Naive thymus-derived CD4-positive, alpha-beta T cell (primary cell): ENCODE measurements at regions of chr15 and their contacts with region 1.

Region 1: GRCh38 chr15:40694688-40695468 is at the start of gene RAD51:
- DNase-seq: peak; percentile 81 to 93 (median 92)
- ATAC-seq: peak; percentile 97
- H3K4me3 ChIP-seq: peak within 1 kb of the TSS; percentile 97
- H3K4me3 Mint-ChIP-seq: peak within 1 kb of the TSS; percentile 93 to 100 (median 95)
- H3K27ac ChIP-seq: peak within 1 kb of the TSS; percentile 91
- H3K27ac Mint-ChIP-seq: peak within 1 kb of the TSS; percentile 95 to 100 (median 99)
- H3K4me1 ChIP-seq: peaks cover 10% of the 10 kb centered on the region in 2 donors
- H3K4me1 Mint-ChIP-seq: peaks cover 14 to 42% (median 22%) of the 10 kb centered on the region in 7 donors
- H3K27me3 ChIP-seq: no peaks in the 10 kb centered on the region
- H3K27me3 Mint-ChIP-seq: no peaks in the 10 kb centered on the region
- total RNA-seq, gene RAD51: 0.51 to 51.5 (median 1.4) TPM

Region 2: DNA sequence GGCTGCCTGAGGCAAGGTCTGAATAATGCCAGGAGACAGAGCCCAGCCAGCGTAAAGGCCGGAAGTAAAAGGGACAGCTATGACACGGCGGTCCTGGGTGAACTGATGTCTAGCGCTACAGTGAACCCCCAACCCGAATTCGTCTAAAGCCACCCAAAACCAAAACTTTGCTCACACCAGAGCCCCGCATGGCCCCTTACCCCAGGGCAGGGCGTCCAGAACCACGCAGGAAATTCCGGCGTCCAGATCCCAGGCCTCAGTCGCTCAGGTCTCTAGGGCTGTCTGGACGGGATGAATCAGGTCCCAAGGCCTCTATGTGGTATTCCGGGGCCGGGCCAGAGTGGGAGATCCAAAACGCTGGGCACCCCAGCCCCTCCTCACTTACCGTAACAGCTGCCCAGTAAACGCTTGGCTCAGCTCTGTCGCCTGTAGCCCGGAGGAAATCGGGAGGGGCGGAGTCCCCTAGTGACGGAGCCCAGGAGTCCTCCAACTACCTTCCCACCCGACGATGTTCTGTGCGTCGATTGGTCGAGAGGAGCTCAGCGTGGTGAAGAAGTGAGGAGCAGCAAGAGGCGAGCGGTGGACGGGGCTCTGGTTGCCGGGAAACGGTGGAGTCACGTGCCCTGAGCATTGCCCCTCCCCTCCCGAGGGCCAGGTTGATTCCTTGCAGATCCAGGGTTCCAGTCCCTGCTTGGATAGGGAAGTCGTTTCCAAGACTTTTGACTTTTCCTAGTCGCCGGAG is 130.1 kb before region 1 on chr15 and contains the start of gene CCDC32:
- CTCF ChIA-PET with region 1: no interaction called
- POLR2A ChIA-PET with region 1: interaction called, 8 read pairs
- intact Hi-C with region 1: loop called (anchors 1 to 2 kb)
- DNase-seq: peak; percentile 75 to 96 (median 93)
- ATAC-seq: peak; percentile 95
- H3K4me3 ChIP-seq: peak within 1 kb of the TSS; percentile 85
- H3K4me3 Mint-ChIP-seq: peak within 1 kb of the TSS; percentile 80 to 97 (median 96)
- H3K27ac ChIP-seq: peak within 1 kb of the TSS; percentile 96
- H3K27ac Mint-ChIP-seq: peak within 1 kb of the TSS; percentile 82 to 98 (median 95)
- H3K4me1 ChIP-seq: peaks cover 11 to 15% of the 10 kb centered on the region in 2 donors
- H3K4me1 Mint-ChIP-seq: peaks cover 35 to 57% (median 55%) of the 10 kb centered on the region in 7 donors
- H3K27me3 ChIP-seq: no peaks in the 10 kb centered on the region
- H3K27me3 Mint-ChIP-seq: peaks cover 0 to 8% (median 0%) of the 10 kb centered on the region in 5 donors
- total RNA-seq, gene CCDC32: 22.4 to 37.3 (median 33.3) TPM

Region 3: DNA sequence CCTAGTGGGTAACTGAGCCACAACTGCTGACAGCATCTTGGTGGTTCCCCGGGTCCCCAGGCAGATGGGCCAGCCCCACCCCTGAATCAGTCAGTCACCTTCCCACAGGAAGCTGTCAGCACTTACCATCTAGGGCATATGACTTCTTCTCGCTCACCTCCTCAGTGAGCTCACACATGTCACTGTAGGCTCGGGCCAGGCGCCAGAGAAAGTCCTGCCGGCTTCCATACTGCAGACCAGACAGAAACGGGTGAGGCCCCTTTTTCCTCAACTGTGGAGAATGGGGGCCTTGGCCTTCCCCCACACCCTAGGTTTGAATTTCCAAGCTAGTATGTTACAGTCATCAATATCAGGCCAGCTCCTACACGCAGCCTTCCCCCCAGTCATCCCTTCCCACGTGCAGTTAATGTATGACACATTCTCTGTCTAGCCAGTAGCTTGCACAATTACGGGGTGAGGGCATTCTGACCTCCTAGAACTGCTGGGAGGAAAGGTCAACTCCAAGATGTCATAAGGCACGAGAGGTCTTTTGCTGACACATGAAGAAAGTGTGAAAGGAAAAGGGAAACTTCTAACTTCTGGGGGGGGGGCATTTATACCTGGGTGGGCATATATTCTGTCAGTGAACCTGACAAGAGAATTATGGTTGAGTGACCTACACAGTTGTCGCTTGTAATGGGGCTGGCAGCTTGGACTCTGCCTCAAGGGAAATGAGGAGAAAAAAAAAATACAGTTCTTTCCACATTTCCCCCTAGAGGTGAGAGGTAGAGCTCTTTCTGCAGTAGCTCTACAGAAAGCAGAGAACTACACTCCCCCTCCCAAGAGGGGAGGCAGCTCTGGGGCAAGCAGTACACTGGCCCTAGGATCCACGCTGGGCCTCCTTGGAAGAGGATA is 49.3 kb after region 1 on chr15:
- CTCF ChIA-PET with region 1: no interaction called
- POLR2A ChIA-PET with region 1: interaction called, 5 read pairs
- intact Hi-C with region 1: loop called in 1 of 2 experiments (anchors 5 kb)
- DNase-seq: peak in 1 of 9 donors; percentile 68
- ATAC-seq: peak; percentile 90
- H3K4me3 ChIP-seq: no peak overlapping the region
- H3K4me3 Mint-ChIP-seq: peak overlapping the region in 2 of 10 donors; percentile 25 to 74
- H3K27ac ChIP-seq: no peak overlapping the region
- H3K27ac Mint-ChIP-seq: peak overlapping the region in 3 of 9 donors; percentile 30 to 94 (median 69)
- H3K4me1 ChIP-seq: peaks cover 0 to 20% of the 10 kb centered on the region in 2 donors
- H3K4me1 Mint-ChIP-seq: peaks cover 0 to 40% (median 0%) of the 10 kb centered on the region in 7 donors
- H3K27me3 ChIP-seq: no peaks in the 10 kb centered on the region
- H3K27me3 Mint-ChIP-seq: no peaks in the 10 kb centered on the region

Region 4: DNA sequence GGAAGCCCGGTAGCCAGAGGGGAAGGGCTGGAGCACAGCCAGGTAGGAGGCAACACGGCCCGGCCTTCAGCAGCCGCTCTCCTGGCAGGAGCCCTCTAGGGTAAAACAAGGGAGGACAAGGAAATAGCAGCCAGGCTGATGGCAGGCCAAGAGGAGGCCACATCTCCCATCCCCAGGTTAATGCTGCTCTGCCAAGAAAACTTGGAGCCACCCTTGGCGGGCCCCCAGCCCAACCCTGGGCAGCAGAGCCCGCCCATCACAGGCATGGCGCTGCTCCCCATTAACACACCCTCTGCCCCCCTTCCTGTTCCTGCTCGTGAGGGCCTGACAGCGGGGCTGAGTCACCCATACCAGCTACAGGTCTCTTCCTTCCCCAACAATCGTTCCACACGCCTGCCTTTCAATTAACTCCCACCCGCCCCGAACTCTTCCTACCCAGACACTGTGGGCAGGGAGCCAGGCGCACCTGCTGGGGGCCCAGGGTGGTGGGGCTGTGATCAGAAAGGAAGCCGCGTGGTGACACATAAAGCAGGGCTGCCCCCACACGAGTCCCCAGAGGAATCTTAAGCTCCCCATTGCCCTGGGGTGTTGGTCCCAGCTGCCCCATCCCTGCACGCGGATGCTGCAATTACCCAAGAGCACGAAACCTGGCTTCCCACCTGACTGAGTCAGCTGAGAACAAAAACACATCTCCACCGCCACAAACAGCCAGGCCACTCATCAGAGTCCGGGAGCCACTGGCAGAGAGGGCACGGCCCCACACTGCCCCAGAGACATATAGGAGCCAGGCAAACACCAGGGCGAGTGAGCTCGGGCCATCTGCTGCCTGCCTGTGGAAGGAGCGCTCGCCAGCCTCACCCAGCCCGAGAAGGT is 74.6 kb after region 1 on chr15 and contains the start of gene C15orf62:
- CTCF ChIA-PET with region 1: no interaction called
- POLR2A ChIA-PET with region 1: interaction called, 21 read pairs
- intact Hi-C with region 1: loop called (anchors 1 kb)
- DNase-seq: peak in 7 of 9 donors; percentile 33 to 71 (median 45)
- ATAC-seq: peak; percentile 58
- H3K4me3 ChIP-seq: no peak within 1 kb of the TSS
- H3K4me3 Mint-ChIP-seq: peak within 1 kb of the TSS; percentile 42 to 73 (median 62)
- H3K27ac ChIP-seq: peak within 1 kb of the TSS; percentile 59
- H3K27ac Mint-ChIP-seq: peak within 1 kb of the TSS; percentile 80 to 93 (median 88)
- H3K4me1 ChIP-seq: peaks cover 10 to 27% of the 10 kb centered on the region in 2 donors
- H3K4me1 Mint-ChIP-seq: peaks cover 24 to 46% (median 36%) of the 10 kb centered on the region in 7 donors
- H3K27me3 ChIP-seq: no peaks in the 10 kb centered on the region
- H3K27me3 Mint-ChIP-seq: no peaks in the 10 kb centered on the region
- total RNA-seq, gene C15orf62: 0.73 to 2.8 (median 1.3) TPM

Region 5: GRCh38 chr15:40893733-40894688 is 199.1 kb after region 1 on chr15 and contains the start of gene VPS18:
- CTCF ChIA-PET with region 1: interaction called, 6 read pairs
- POLR2A ChIA-PET with region 1: interaction called, 10 read pairs
- intact Hi-C with region 1: loop called (anchors 1 kb)
- DNase-seq: peak; percentile 96 to 99 (median 98)
- ATAC-seq: peak; percentile 99
- H3K4me3 ChIP-seq: peak within 1 kb of the TSS; percentile 94
- H3K4me3 Mint-ChIP-seq: peak within 1 kb of the TSS; percentile 96 to 99 (median 98)
- H3K27ac ChIP-seq: peak within 1 kb of the TSS; percentile 83
- H3K27ac Mint-ChIP-seq: peak within 1 kb of the TSS; percentile 87 to 98 (median 96)
- H3K4me1 ChIP-seq: peaks cover 17 to 18% of the 10 kb centered on the region in 2 donors
- H3K4me1 Mint-ChIP-seq: peaks cover 30 to 47% (median 37%) of the 10 kb centered on the region in 7 donors
- H3K27me3 ChIP-seq: no peaks in the 10 kb centered on the region
- H3K27me3 Mint-ChIP-seq: peaks cover 0 to 7% (median 0%) of the 10 kb centered on the region in 5 donors
- total RNA-seq, gene VPS18: 19.9 to 22.3 (median 20.5) TPM